Activated CD4-positive, alpha-beta memory T cell treated with anti-CD3 and anti-CD28 coated beads for 36 hours (primary cell): ENCODE measurements at regions of chr15 and their contacts with region 1.

Region 1: DNA sequence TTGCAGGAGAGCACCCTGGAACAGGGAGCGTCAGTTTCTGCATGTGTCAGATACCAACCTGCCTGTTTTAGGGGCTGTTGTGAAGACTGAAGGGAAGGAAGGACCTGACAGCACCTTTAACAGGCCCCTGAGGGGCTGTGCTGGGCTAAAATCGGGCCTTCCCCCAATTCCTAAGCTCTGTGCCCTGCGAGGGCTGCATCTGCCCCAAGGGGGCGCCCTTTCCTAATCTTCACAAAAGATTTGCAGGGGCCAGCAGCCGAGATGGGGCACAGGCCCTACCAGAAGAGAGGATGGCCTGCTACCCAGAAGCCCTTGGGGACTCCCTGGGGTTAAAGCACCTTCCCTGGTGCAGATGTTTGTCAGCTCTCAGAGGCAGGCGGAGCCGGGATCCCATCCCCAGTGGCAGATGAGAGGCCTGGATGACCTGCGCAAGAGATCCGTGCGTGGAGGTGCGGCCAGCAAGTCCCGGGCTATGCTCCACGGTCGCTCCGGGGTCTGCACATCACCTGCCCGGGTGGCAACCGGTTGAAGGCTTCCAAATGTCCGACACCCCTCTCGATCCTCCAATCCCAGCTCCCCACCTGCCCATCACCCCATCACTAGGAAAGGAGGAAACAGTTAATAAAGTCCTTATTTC is 53.6 kb downstream of the RHCG start:
- DNase-seq: peak; percentile 68
- H3K4me3 Mint-ChIP-seq: no peak overlapping the region
- H3K27ac Mint-ChIP-seq: no peak overlapping the region
- H3K4me1 Mint-ChIP-seq: no peaks in the 10 kb centered on the region
- H3K27me3 Mint-ChIP-seq: peaks cover 30% of the 10 kb centered on the region

Region 2: DNA sequence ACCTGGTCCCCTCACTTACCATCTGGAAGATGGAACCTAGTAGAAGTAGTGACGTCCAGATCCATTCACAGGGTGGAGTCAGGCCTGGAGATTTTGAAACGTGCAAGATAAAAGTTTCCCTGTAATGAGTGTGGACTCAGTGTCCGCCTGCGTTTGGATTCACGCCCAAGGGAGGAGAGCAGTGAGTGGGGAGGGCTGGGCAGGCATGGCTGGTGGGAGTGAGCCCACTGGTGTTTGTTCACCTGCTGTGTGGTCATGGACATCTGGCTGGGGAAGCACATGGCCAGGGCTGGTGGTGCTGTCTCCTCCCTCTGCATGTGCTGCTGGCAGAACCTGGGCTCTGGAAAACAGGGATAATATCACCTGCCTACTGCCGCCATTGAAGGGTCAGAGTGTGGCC is 258.4 kb before region 1 on chr15:
- CTCF ChIA-PET with region 1: no interaction called
- POLR2A ChIA-PET with region 1: no interaction called
- intact Hi-C with region 1: no loop called
- DNase-seq: no peak
- H3K4me3 Mint-ChIP-seq: no peak overlapping the region
- H3K27ac Mint-ChIP-seq: no peak overlapping the region
- H3K4me1 Mint-ChIP-seq: peaks cover 19% of the 10 kb centered on the region
- H3K27me3 Mint-ChIP-seq: no peaks in the 10 kb centered on the region

Region 3: GRCh38 chr15:89406940-89407607 is 35.7 kb before region 1 on chr15:
- CTCF ChIA-PET with region 1: no interaction called
- POLR2A ChIA-PET with region 1: no interaction called
- intact Hi-C with region 1: no loop called
- DNase-seq: no peak
- H3K4me3 Mint-ChIP-seq: peak overlapping the region; percentile 8
- H3K27ac Mint-ChIP-seq: no peak overlapping the region
- H3K4me1 Mint-ChIP-seq: peaks cover 41% of the 10 kb centered on the region
- H3K27me3 Mint-ChIP-seq: peaks cover 87% of the 10 kb centered on the region

Region 4: DNA sequence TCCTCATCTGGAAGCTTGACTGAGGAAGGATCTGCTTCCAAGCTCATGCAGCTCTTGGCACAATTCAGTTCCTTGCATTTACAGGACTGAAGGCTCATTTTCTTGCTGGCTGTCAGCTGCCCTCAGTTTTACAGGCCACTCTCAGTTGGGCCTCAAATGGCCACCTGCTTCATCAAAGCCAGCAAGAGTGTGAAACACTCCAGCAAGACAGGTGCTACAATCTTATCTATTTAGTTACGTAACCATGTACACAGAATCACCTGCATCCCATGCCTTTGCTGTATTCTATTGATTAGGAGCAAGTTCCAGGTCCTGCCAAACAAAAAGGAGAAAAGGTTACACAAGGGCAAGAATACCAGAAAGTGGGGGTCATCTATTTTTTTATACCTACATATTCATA is 12.7 kb after region 1 on chr15:
- CTCF ChIA-PET with region 1: interaction called, 15 read pairs
- POLR2A ChIA-PET with region 1: no interaction called
- intact Hi-C with region 1: no loop called
- DNase-seq: no peak
- H3K4me3 Mint-ChIP-seq: no peak overlapping the region
- H3K27ac Mint-ChIP-seq: no peak overlapping the region
- H3K4me1 Mint-ChIP-seq: no peaks in the 10 kb centered on the region
- H3K27me3 Mint-ChIP-seq: peaks cover 13% of the 10 kb centered on the region

Region 5: DNA sequence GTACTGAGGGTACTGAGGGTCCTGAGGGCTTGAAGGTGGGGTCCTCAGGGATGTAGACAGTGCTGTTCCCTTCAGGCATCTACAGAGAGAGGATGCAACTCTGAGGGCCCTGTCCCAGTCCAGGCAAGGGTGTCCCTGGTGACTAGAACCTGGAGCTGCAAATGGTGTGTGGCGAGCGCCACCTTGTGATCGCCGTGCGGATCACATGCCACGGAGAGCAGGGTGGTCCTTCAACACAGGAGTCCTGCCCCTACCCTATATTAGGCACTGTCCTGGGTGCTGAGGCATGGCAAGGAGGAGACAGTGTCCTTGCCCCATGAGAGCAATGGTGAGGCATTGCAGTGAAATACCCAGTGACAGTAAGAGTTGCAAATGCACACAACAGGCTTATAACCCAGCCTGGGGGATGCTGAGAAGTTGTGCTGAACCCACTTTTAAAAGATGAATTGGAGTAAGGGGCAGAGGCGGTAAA is 30.0 kb after region 1 on chr15:
- CTCF ChIA-PET with region 1: interaction called, 15 read pairs
- POLR2A ChIA-PET with region 1: no interaction called
- intact Hi-C with region 1: no loop called
- DNase-seq: peak; percentile 68
- H3K4me3 Mint-ChIP-seq: no peak overlapping the region
- H3K27ac Mint-ChIP-seq: no peak overlapping the region
- H3K4me1 Mint-ChIP-seq: no peaks in the 10 kb centered on the region
- H3K27me3 Mint-ChIP-seq: peaks cover 14% of the 10 kb centered on the region

Region 6: DNA sequence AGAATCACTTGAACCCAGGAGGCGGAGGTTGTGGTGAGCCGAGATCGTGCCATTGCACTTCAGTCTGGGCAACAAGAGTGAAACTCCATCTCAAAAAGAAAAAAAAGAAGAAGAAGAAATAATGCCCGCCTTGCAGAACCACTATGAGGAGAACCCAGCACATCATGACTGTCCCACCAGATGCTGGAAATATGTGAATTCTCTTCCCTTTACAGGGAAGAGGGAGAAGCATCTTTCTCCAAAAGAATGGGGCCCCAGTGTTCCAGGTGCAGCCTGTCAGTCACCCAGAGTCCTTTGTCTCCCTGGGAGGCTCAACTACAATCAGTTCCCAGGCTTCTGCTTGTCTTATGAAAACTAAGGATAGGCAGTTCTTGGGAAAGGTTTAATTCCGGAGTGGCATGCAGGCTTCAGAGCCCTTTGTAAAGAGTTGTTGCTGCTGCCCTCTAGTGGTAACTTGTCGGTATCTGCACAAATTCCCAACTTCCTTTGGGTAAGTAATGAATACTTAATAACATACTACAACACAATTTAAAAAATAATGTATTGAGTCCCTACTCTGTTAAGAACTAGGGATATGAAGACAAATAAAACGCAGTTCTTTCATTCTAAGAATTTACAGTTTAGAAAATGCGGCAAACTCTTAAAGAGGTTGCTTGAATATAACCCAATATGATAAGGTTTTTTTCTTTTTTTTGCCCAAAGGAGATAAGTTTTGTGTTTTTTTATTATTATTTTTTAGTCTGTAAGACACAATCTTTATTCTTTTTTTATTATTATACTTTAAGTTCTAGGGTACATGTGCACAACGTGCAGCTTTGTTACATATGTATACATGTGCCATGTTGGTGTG is 113.8 kb after region 1 on chr15:
- CTCF ChIA-PET with region 1: interaction called, 5 read pairs
- POLR2A ChIA-PET with region 1: no interaction called
- intact Hi-C with region 1: loop called (anchors 5 kb)
- DNase-seq: peak; percentile 49
- H3K4me3 Mint-ChIP-seq: no peak overlapping the region
- H3K27ac Mint-ChIP-seq: no peak overlapping the region
- H3K4me1 Mint-ChIP-seq: peaks cover 1% of the 10 kb centered on the region
- H3K27me3 Mint-ChIP-seq: peaks cover 4% of the 10 kb centered on the region